Aorta (tissue), 5 donors: ENCODE measurements at regions of chr1 and their contacts with region 1.

Region 1: GRCh38 chr1:26275580-26276431 is 4.1 kb upstream of the SH3BGRL3 start:
- DNase-seq: peak; percentile 91 to 92
- ATAC-seq: peak; percentile 84
- H3K4me3 ChIP-seq: no peak overlapping the region
- H3K27ac ChIP-seq: no peak overlapping the region
- H3K4me1 ChIP-seq: no peaks in the 10 kb centered on the region
- H3K27me3 ChIP-seq: no peaks in the 10 kb centered on the region

Region 2: GRCh38 chr1:25990702-25991395 is 285.0 kb before region 1 on chr1:
- intact Hi-C with region 1: no loop called
- DNase-seq: no peak
- ATAC-seq: no peak
- H3K4me3 ChIP-seq: no peak overlapping the region
- H3K27ac ChIP-seq: no peak overlapping the region
- H3K4me1 ChIP-seq: no peaks in the 10 kb centered on the region
- H3K27me3 ChIP-seq: no peaks in the 10 kb centered on the region

Region 3: GRCh38 chr1:26321315-26322041 is 45.7 kb after region 1 on chr1:
- intact Hi-C with region 1: loop called (anchors 1 kb)
- DNase-seq: peak; percentile 95 to 97
- ATAC-seq: peak; percentile 92
- H3K4me3 ChIP-seq: no peak overlapping the region
- H3K27ac ChIP-seq: no peak overlapping the region
- H3K4me1 ChIP-seq: no peaks in the 10 kb centered on the region
- H3K27me3 ChIP-seq: no peaks in the 10 kb centered on the region